AG04449 (cell line): ENCODE measurements at regions of chr1 and their contacts with region 1.

Region 1: GRCh38 chr1:87292684-87293493 is 35.8 kb upstream of the LMO4 start:
- DNase-seq: no peak
- H3K4me3 ChIP-seq: no peak overlapping the region
- CTCF ChIP-seq: peak; percentile 51

Region 2: DNA sequence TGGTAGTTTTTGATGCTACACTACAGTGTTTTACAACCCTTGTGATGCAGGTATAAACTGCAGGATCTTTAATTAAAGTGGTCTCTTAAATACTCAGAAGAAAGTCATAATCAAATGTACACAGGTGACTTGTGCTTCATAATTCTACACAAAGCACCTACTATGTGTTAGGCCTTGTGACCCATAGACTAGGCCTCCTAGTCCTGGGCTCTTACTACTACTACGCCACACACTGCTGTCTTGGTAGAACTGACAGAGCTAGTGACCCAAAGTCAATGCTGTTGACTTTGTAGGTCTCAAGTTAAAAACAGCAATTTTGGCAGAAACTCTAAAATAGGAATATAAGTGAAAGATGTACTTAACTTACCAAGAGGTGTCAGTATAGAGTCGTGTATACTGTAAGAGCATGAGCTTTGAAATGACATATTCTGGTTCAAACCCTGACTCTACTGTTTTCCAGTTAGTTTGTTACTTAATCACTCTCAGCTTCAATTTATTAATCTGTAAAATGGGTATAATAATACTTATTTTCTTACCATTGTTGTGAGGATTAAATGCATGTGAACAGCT is 12.8 kb before region 1 on chr1:
- CTCF ChIA-PET with region 1: interaction called, 23 read pairs
- POLR2A ChIA-PET with region 1: no interaction called
- DNase-seq: no peak
- H3K4me3 ChIP-seq: no peak overlapping the region
- CTCF ChIP-seq: no peak

Region 3: DNA sequence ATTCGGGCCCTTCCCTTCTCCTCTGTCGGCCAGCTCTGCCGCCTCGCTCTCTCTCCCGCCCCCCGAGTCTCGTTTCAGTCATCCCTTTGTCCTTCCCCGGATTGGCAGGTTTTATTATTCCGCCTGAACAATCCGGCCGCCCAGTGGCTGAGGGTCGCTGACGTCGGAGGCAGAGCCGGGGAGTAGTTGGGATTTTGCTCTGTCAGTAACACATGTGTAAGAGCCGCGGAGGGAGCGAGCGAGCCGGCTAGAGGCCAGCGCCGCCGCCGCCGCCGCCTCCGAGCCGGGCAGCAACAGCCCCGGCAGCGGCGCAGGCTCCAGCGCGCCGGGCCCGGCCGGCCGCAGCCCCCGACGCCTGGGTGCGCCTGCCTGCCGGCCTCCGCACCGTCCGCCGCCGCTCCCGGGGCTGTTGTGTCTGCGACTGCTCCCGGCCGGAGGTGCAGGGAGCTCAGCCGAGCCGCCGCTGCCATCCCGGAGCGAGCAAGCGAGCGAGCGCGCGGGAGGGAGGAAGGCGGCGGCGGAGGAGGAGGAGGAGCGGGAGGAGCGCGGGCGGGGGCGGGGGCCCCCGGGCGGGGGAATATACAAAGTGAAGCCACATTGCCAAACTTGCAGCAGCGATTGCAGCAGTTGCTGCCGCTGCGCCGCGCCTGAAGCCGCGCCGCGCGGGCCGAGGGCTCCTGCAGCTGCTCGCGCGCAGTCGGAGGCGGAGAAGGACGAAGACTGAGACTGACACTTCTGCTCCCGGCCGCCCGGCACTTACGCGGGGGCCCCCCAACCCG is 35.6 kb after region 1 on chr1 and contains the start of gene LMO4:
- CTCF ChIA-PET with region 1: interaction called, 37 read pairs
- POLR2A ChIA-PET with region 1: interaction called, 4 read pairs
- DNase-seq: peak; percentile 89
- H3K4me3 ChIP-seq: peak within 1 kb of the TSS; percentile 71
- CTCF ChIP-seq: no peak

Region 4: GRCh38 chr1:87410776-87411480 is 118.0 kb after region 1 on chr1:
- CTCF ChIA-PET with region 1: no interaction called
- POLR2A ChIA-PET with region 1: no interaction called
- DNase-seq: no peak
- H3K4me3 ChIP-seq: no peak overlapping the region
- CTCF ChIP-seq: no peak

Region 5: DNA sequence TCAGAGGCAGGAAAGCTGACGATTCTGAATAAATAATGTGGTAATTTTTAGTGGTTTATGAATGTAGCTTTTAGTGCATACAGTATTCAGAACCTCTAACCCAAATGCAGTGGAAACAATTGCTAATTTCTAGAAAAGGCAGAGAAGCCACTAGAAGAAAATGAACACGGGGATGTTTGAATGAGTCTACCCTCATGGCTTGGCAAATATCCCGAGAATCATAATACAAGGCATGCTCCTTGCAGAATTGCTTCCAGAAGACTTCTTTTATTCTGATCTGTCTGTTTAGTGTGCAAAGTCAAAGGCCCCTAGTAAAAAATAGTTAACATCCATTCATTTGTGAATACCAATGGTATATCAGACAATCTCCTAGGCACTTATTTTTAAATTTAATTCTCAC is 282.6 kb after region 1 on chr1:
- CTCF ChIA-PET with region 1: no interaction called
- POLR2A ChIA-PET with region 1: no interaction called
- DNase-seq: no peak
- H3K4me3 ChIP-seq: no peak overlapping the region
- CTCF ChIP-seq: no peak

Region 6: DNA sequence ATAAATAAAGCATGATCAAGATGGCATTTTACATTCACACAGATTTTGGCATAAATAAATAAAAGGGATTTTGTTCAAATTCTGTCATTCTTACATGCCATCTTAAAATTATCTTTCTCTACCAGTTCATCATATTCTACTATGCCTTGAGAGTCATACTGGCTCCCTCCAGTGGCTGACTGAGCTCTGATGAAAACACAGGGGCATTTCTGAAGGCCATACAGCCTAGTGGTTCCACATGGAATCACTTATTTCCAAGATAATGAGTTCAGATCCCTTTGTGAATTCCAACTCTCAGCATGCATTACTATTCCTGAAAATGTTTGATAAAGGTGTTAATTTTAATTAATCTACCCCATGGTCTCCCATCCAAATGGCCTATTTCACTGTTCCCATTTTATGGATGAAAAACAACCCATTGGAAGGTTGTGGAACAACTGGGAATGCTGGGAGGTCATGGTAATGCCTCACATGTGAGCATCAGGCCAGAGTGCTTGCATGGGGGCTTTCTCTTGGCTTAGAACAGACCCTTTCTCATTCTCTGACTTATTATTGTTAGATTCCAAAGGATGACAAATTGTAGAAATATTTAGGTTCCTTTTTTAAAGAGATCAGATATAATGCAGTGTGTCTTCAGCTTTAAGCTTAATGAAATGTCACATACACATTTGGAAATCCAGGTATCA is 768.7 kb after region 1 on chr1:
- CTCF ChIA-PET with region 1: interaction called, 12 read pairs
- POLR2A ChIA-PET with region 1: no interaction called
- DNase-seq: no peak
- H3K4me3 ChIP-seq: no peak overlapping the region
- CTCF ChIP-seq: peak; percentile 73